PC-9 (cell line): ENCODE measurements at regions of chr7 and their contacts with region 1.

Region 1: DNA sequence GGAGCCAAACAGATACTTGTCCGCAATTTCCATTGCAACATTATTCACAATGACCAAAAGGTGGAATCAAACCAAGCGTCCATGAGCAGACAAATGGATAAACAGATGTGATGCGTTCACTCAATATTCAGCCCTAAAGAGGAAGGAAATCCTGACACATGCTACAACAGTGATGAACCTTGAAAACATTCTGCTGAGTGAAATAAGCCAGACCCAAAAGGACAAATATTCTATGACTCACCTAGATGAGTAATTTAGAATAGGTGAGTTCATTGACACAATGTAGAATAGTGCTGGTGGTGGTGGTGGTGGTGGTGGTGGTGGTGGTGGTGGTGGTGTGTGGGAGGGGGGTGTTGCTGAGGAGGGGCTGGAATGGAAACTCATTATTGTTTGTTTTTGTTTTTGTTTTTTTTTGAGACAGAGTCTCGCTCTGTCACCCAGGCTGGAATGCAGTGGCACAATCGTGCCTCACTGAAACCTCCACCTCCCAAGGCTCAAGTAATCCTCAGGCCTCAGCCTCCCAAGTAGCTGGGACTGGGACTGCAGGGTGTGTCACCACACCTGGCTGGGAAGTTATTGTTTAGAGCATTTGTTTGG is 28.6 kb downstream of the SMKR1 start:
- DNase-seq: peak; percentile 64 to 97
- H3K4me3 ChIP-seq: no peak overlapping the region
- H3K27ac ChIP-seq: peak overlapping the region; percentile 79
- H3K4me1 ChIP-seq: peaks cover 24% of the 10 kb centered on the region
- H3K27me3 ChIP-seq: no peaks in the 10 kb centered on the region
- CTCF ChIP-seq: no peak

Region 2: GRCh38 chr7:129502777-129503685 is 27.9 kb before region 1 on chr7:
- CTCF ChIA-PET with region 1: no interaction called
- POLR2A ChIA-PET with region 1: interaction called, 17 read pairs
- intact Hi-C with region 1: no loop called
- DNase-seq: no peak
- H3K4me3 ChIP-seq: peak overlapping the region; percentile 63
- H3K27ac ChIP-seq: no peak overlapping the region
- H3K4me1 ChIP-seq: 0 out of 2 replicates have a peak, but pooled peaks cover 4% of the 10 kb centered on the region
- H3K27me3 ChIP-seq: no peaks in the 10 kb centered on the region
- CTCF ChIP-seq: no peak

Region 3: GRCh38 chr7:129578829-129579228 is 47.9 kb after region 1 on chr7:
- CTCF ChIA-PET with region 1: no interaction called
- POLR2A ChIA-PET with region 1: no interaction called
- intact Hi-C with region 1: no loop called
- DNase-seq: no peak
- H3K4me3 ChIP-seq: no peak overlapping the region
- H3K27ac ChIP-seq: no peak overlapping the region
- H3K4me1 ChIP-seq: no peaks in the 10 kb centered on the region
- H3K27me3 ChIP-seq: no peaks in the 10 kb centered on the region
- CTCF ChIP-seq: no peak

Region 4: DNA sequence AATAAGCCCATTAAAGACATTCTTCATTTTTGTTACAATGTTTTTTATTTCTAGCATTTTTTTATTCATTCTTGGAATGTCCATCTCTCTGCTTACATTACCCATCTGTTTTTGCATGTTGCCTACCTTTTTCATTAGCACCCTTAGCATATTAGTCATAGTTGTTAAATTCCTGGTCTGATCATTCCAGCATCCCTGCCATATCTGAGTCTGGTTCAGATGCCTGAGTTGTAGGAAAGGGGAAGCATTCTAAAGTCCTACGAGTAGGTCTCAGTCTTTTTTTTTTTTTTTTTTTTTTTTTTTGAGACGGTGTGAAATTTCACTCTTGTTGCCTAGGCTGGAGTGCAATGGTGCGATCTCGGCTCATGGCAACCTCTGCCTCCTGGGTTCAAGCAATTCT is 61.0 kb after region 1 on chr7:
- CTCF ChIA-PET with region 1: no interaction called
- POLR2A ChIA-PET with region 1: no interaction called
- intact Hi-C with region 1: loop called (anchors 2 kb)
- DNase-seq: peak in 1 of 2 experiments; percentile 53
- H3K4me3 ChIP-seq: no peak overlapping the region
- H3K27ac ChIP-seq: peak overlapping the region; percentile 72; the same call in 1 of the 2 replicates
- H3K4me1 ChIP-seq: peaks cover 23% of the 10 kb centered on the region
- H3K27me3 ChIP-seq: no peaks in the 10 kb centered on the region
- CTCF ChIP-seq: no peak

Region 5: DNA sequence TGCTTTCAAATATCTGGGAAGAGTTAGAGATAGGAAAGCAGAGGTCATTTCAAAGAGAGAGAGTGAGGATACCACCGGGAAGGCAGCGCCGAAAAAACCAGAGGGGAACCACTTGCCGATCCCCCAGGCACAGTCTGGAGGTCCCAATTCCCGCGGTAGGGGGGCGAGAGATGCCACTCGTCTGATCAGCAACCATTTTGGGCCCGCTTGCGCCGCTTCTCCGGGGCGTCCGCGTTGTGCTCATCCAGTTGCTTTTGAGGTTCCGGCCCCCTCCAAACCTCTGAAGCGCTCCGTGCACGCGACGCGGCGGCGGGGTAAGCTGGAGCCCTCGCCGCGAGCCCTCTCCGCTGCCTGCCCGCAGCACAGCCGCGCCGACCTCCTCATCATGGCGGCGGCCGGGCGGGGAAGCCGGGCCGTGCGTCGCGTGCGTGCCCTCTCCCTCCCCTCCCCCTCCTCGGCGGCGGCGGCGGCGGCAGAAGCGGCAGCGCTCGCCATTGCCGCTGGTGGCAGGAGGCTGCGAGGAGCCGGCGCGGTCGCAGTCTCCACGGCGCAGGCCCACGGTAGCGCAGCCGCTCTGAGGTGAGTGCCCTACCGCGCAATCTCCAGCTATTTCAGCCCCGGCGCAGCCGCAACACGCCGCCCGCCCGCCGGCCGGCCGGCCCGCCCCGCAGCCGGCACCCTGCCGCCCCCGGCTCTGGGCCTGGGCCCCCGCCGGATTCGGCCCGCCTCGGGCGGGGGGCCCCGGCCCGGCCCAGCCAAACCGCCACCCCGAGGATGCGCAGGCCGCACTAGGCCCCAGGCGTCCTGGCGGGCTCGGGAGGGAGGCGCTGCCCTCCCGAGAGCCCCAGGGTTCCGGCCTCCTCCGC is 80.6 kb after region 1 on chr7 and contains the start of gene NRF1:
- CTCF ChIA-PET with region 1: interaction called, 20 read pairs
- POLR2A ChIA-PET with region 1: interaction called, 12 read pairs
- intact Hi-C with region 1: loop called (anchors 1 kb)
- DNase-seq: peak; percentile 67 to 94
- H3K4me3 ChIP-seq: peak within 1 kb of the TSS; percentile 96
- H3K27ac ChIP-seq: peak within 1 kb of the TSS; percentile 75
- H3K4me1 ChIP-seq: peaks cover 29% of the 10 kb centered on the region
- H3K27me3 ChIP-seq: no peaks in the 10 kb centered on the region
- CTCF ChIP-seq: no peak
- total RNA-seq, gene NRF1: 20.5 and 23.2 TPM in 2 replicates